ENCODE measurements at regions of chr1 and their contacts with region 1.

Region 1: DNA sequence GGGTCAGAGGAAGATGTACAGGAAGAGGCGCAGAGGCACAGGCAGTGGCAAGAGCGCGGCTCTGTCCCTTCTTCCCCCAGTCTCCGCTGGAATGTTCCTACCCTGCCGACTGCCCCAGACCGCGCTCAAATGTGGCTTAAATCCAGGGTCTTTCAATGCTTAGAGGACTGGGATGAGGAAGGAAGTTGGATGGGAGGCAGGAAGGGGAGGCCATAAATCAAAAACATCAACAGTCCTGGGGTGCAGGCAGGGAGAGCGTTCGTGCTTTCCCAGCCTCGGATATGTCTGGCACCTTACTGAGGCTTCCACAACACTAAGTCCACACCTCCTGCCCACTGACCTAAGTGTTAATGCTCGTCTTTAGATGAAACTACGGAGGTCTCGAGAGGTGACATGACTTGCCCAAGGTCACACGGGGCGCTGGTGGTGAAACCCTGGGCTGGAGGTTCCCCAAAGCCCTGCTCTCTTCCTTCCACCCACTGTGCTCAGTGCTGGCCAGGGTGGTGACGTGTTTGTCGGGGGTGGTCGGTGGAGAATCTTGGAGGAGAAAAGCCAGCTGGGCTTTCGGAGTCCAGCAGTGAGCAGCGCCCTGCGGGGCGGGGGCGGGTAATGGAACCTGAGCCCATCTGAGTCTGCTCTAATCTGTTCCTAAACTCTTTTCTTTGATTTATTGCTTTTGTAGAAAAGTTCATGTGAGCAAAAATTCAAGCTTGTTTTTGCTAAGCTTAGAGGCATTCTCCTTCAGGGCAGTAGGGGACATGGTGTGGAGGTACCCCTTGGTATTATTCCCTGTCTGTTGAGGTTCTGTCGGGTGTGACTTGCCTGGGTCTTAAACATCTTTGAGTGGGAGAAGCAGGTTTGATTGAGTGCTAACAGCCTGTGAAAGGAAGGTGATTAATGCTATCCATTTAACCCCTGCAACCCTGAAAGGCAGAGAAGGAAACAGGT is 708 bp downstream of the CDA start:
- DNase-seq: no peak
- ATAC-seq: peak; percentile 57
- H3K4me3 ChIP-seq: peak overlapping the region in 2 of 3 experiments; percentile 42 to 52; a peak in 3 of 6 replicates
- H3K27ac ChIP-seq: no peak overlapping the region
- H3K4me1 ChIP-seq: peaks cover 34% of the 10 kb centered on the region
- H3K27me3 ChIP-seq: peaks cover 1 to 15% of the 10 kb centered on the region in 2 experiments; a peak in 3 of 5 replicates
- CTCF ChIP-seq: no peak
- EP300 ChIP-seq: no peak
- POLR2A ChIP-seq: no peak
- RAD21 ChIP-seq: no peak

Region 2: DNA sequence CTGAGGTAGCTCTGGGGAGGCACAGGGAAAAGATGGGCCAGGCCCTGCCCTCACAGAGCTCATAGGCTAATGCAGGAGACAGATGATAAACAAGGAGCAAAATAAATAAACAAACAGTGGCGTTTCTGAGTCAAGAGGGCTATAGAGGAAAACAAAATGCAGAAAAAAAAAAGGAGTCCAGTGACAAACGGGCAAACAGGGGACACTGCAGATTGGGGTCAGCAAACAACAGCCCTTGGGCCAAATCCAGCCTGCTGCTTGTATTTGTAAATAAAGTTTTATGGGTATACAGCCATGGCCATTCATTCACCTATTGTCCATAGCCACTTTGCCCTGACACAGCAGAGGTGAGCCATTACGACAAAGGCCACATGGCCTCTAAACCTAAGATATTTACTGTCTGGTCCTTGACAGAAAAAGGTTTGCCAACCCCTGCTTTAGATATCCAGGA is 24.6 kb after region 1 on chr1:
- CTCF ChIA-PET with region 1: no interaction called
- POLR2A ChIA-PET with region 1: interaction called, 10 read pairs
- in situ Hi-C with region 1: no loop called
- intact Hi-C with region 1: no loop called
- DNase-seq: no peak
- ATAC-seq: no peak; the same call in 2 of the 3 replicates
- H3K4me3 ChIP-seq: no peak overlapping the region
- H3K27ac ChIP-seq: peak overlapping the region; percentile 65
- H3K4me1 ChIP-seq: peaks cover 22% of the 10 kb centered on the region
- H3K27me3 ChIP-seq: no peaks in the 10 kb centered on the region
- CTCF ChIP-seq: no peak
- EP300 ChIP-seq: no peak
- POLR2A ChIP-seq: no peak
- RAD21 ChIP-seq: no peak

Region 3: DNA sequence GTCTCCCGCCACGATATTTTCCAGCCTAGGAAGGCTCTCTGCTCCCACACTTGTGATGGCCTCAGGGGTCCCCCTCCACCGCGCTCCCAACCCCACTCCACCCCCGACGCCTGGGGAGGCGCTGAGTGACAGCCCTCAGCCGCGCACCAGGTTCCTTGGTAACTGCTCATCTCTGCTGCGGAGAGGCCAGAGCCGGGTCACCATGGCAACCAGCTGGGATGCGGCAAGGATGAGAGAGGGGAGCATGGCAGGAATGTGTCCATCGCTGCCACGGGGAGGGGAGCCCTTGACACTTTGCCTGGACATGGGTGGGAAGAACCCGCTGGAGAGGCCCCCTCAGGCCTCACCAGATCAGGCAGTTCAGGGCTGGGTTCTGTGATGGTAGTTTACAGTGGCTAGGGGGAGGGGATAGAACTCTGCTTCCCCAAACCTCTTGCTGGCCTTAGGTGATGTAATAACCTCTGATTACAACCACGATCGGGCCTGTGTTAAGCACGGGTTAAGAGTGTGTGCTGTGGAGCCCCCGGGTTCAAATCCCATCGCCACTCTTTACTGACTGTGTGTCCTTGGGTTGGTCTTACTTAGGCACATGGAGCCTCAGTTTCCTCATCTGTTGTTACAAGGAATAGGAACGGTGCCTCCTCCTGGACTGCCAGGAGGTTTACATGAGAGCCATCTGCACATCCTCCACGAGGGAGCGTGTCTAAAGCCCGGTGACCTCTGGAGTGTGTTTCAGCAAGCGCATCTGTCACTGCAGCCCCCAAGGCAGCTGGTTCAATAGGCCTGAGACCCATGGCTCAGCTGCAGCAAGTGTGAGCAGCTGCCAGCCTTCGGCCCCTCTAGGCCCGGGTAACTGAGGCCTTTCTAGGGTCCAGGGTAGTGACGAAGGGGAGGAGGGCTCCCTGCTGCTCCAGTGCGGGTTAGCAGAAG is 121.9 kb after region 1 on chr1:
- CTCF ChIA-PET with region 1: no interaction called
- POLR2A ChIA-PET with region 1: no interaction called
- in situ Hi-C with region 1: no loop called
- intact Hi-C with region 1: no loop called
- DNase-seq: no peak
- ATAC-seq: no peak
- H3K4me3 ChIP-seq: no peak overlapping the region
- H3K27ac ChIP-seq: no peak overlapping the region
- H3K4me1 ChIP-seq: peaks cover 21% of the 10 kb centered on the region
- H3K27me3 ChIP-seq: peaks cover 0 to 7% of the 10 kb centered on the region in 2 experiments; a peak in 2 of 5 replicates
- CTCF ChIP-seq: no peak
- EP300 ChIP-seq: no peak
- POLR2A ChIP-seq: no peak
- RAD21 ChIP-seq: no peak